ENCODE measurements at regions of chrX and their contacts with region 1.

Region 1: GRCh38 chrX:76253432-76253831 is 80.6 kb downstream of the PBDC1 start:
- DNase-seq: peak; percentile 8
- H3K4me3 ChIP-seq: no peak overlapping the region
- H3K27ac ChIP-seq: no peak overlapping the region
- H3K27me3 ChIP-seq: no peaks in the 10 kb centered on the region
- CTCF ChIP-seq: peak; percentile 63

Region 2: GRCh38 chrX:76148753-76149152 is 104.7 kb before region 1 on chrX:
- CTCF ChIA-PET with region 1: interaction called, 10 read pairs
- POLR2A ChIA-PET with region 1: no interaction called
- DNase-seq: no peak
- H3K4me3 ChIP-seq: peak overlapping the region; percentile 17; the same call in 1 of the 2 replicates
- H3K27ac ChIP-seq: peak overlapping the region; percentile 39
- H3K27me3 ChIP-seq: no peaks in the 10 kb centered on the region
- CTCF ChIP-seq: no peak

Measured in AG04450 (cell line).